ENCODE measurements at regions of chr1 and their contacts with region 1.

Region 1: GRCh38 chr1:6157528-6158174 is 22.5 kb downstream of the CHD5 start:
- DNase-seq: no peak
- ATAC-seq: no peak
- H3K4me3 ChIP-seq: no peak overlapping the region
- H3K27ac ChIP-seq: no peak overlapping the region
- H3K4me1 ChIP-seq: peaks cover 0 to 7% (median 0%) of the 10 kb centered on the region in 9 donors
- H3K27me3 ChIP-seq: peaks cover 0 to 41% (median 25%) of the 10 kb centered on the region in 7 donors
- CTCF ChIP-seq: no peak

Region 2: DNA sequence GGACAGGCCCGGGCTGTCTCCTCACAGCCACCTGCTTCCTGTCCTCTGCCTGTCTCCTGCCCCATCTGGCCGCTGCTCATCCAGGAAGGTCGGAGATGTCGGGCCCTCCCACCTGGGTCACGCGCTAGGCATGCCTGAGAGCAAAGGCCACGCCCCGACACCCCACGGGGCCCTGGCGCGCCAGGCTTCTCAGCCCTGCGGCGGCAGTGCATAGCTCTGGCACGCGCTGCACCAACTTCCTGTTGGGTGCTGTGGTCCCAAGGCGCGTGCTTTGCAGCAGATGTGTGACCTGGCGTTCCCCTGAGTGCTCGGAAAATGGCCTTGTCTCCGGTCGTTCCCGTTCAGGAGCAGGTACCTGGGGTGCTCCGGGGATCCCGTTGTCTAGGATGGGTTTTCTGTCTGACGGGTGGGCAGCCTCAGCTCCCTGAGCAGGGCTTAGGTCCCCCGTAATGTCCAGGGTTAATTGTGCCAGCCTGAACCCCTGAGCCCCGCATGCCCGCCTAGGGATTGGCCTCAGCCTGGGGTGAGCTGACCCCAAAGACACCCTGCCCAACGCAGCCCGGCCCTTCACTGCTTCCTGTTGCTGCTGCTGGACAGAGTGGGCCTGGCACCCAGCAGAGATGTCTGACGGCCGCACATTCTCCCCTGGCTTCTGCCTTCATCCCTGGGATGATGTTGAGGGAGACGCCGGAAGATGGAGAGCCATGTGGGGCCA is 131.4 kb before region 1 on chr1:
- intact Hi-C with region 1: no loop called
- DNase-seq: peak; percentile 81 to 83
- ATAC-seq: peak; percentile 87 to 94 (median 92)
- H3K4me3 ChIP-seq: peak overlapping the region in 9 of 10 donors; percentile 17 to 65 (median 40)
- H3K27ac ChIP-seq: peak overlapping the region; percentile 22 to 84 (median 72)
- H3K4me1 ChIP-seq: peaks cover 0 to 37% (median 15%) of the 10 kb centered on the region in 9 donors
- H3K27me3 ChIP-seq: peaks cover 0 to 15% (median 0%) of the 10 kb centered on the region in 7 donors
- CTCF ChIP-seq: no peak

Region 3: DNA sequence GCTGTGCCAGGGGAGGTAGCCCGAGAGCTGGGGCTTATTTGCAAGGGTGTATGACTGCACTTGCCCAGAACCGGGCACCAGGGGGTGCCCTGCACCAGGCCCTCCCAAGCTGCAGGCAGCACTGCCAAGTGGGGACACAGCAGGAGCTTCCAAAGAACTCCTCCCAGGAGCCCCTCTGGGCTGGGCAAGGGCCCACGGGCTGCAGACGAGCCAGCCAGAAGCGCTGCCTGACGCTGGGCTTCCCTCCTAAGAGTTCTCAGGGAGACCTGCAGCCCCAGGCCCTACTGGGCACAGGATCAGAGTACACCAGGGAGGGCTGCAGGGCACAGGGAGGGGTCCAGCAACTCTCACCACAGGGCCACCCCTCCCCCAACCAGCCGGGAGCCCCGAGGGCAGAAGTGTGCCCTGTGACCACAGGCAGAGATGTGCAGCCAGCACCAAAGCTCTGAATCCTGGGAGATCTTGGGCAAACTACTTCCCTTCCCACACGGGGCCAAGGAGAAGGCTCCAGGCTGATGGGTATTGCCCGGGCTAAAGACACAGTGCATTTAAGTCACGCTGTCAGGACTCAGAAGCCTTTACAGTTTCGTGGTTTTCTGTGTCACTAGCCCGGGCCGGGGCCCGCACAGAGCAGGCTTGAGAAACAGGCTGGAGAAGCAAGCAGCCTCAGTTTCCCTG is 48.6 kb before region 1 on chr1:
- intact Hi-C with region 1: loop called in 1 of 10 experiments (anchors 10 kb)
- DNase-seq: peak in 1 of 2 donors; percentile 17
- ATAC-seq: peak in 5 of 8 donors; percentile 20 to 60 (median 51)
- H3K4me3 ChIP-seq: no peak overlapping the region
- H3K27ac ChIP-seq: no peak overlapping the region
- H3K4me1 ChIP-seq: no peaks in the 10 kb centered on the region
- H3K27me3 ChIP-seq: peaks cover 0 to 51% (median 31%) of the 10 kb centered on the region in 7 donors
- CTCF ChIP-seq: peak in 7 of 9 donors; percentile 23 to 52 (median 35)

Region 4: GRCh38 chr1:6141592-6141991 is 16.1 kb before region 1 on chr1:
- intact Hi-C with region 1: no loop called
- DNase-seq: peak in 1 of 2 donors; percentile 1
- ATAC-seq: no peak
- H3K4me3 ChIP-seq: no peak overlapping the region
- H3K27ac ChIP-seq: no peak overlapping the region
- H3K4me1 ChIP-seq: no peaks in the 10 kb centered on the region
- H3K27me3 ChIP-seq: peaks cover 0 to 31% (median 22%) of the 10 kb centered on the region in 7 donors
- CTCF ChIP-seq: no peak

Region 5: GRCh38 chr1:6653436-6654290 is 496.0 kb after region 1 on chr1:
- intact Hi-C with region 1: loop called in 1 of 10 experiments (anchors 10 kb)
- DNase-seq: no peak
- ATAC-seq: no peak
- H3K4me3 ChIP-seq: no peak overlapping the region
- H3K27ac ChIP-seq: no peak overlapping the region
- H3K4me1 ChIP-seq: peaks cover 0 to 9% (median 0%) of the 10 kb centered on the region in 9 donors
- H3K27me3 ChIP-seq: no peaks in the 10 kb centered on the region
- CTCF ChIP-seq: no peak

Measured in heart right ventricle (tissue), 16 donors.